Heart left ventricle (tissue), 16 donors: ENCODE measurements at regions of chr20 and their contacts with region 1.

Region 1: GRCh38 chr20:21956591-21956990 is 251.1 kb downstream of the PAX1 start:
- DNase-seq: no peak
- ATAC-seq: no peak
- H3K4me3 ChIP-seq: no peak overlapping the region
- H3K27ac ChIP-seq: no peak overlapping the region
- H3K4me1 ChIP-seq: no peaks in the 10 kb centered on the region
- H3K27me3 ChIP-seq: no peaks in the 10 kb centered on the region
- CTCF ChIP-seq: no peak
- POLR2A ChIP-seq: no peak

Region 2: DNA sequence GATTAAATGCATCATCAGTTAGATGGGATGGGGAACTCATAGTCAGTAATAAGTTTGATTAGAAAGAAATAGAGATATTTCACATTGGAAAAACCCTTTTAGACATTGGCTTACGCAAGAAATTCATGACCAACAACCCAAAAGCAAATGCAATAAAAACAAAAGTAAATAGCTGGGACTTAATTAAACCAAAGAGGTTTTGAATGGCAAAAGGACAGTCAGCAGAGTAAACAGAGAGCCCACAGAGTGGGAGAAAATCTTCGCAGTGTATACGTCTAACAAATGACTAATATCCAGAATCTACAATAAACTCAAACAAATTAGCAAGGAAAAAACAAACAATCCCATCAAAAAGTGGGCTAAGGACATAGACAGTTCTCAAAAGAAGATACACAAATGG is 95.7 kb before region 1 on chr20:
- intact Hi-C with region 1: no loop called
- DNase-seq: no peak
- ATAC-seq: no peak
- H3K4me3 ChIP-seq: no peak overlapping the region
- H3K27ac ChIP-seq: no peak overlapping the region
- H3K4me1 ChIP-seq: no peaks in the 10 kb centered on the region
- H3K27me3 ChIP-seq: no peaks in the 10 kb centered on the region
- CTCF ChIP-seq: no peak
- POLR2A ChIP-seq: no peak

Region 3: DNA sequence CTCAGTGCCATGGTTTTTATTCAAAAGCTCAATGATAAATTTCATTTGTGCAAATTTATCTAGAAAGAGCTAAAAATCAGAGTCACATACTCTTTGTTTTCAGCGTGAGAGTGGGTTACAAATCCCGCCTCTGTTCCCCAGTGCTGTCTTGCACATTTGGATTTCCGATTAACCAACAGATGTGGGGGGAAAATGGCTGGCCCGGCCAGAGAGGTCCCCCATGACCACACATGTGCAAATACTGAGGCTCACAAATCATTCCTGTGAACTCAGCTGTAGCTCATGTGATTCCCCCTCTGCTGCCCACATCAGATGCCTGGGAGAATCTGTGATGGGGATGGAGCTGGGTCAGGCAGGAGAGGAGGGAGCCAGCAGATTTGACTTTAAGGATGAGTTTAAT is 82.5 kb before region 1 on chr20:
- intact Hi-C with region 1: loop called in 1 of 10 experiments (anchors 10 kb)
- DNase-seq: no peak
- ATAC-seq: no peak
- H3K4me3 ChIP-seq: no peak overlapping the region
- H3K27ac ChIP-seq: no peak overlapping the region
- H3K4me1 ChIP-seq: no peaks in the 10 kb centered on the region
- H3K27me3 ChIP-seq: no peaks in the 10 kb centered on the region
- CTCF ChIP-seq: no peak
- POLR2A ChIP-seq: no peak